Ovary (tissue), 10 donors: ENCODE measurements at regions of chr4 and their contacts with region 1.

Region 1: DNA sequence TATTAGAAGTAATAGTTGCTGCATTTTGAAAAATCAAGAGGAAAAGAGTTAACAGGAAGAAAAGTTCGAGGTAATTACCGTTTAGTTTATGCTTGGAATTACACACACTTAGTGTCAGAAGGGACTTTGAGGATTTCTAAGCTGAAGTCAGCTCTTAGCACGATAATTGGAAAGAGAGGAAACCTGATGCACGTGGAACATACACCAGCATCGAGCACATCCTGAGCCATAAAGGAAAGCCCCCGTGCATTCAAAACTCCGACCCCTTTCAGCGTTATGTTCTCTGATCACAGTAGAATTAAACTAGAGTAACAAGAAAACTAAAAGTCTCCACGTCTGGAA is 400 bp upstream of the PAQR3 start:
- DNase-seq: no peak
- H3K4me3 ChIP-seq: peak overlapping the region; percentile 67
- H3K27ac ChIP-seq: no peak overlapping the region
- H3K4me1 ChIP-seq: no peaks in the 10 kb centered on the region
- H3K27me3 ChIP-seq: no peaks in the 10 kb centered on the region
- CTCF ChIP-seq: no peak
- EP300 ChIP-seq: no peak
- POLR2A ChIP-seq: no peak

Region 2: GRCh38 chr4:80202190-80202711 is 1262.6 kb after region 1 on chr4:
- intact Hi-C with region 1: loop called in 1 of 4 experiments (anchors 10 kb)
- DNase-seq: peak; percentile 86 to 94 (median 88)
- H3K4me3 ChIP-seq: peak overlapping the region; percentile 68
- H3K27ac ChIP-seq: peak overlapping the region; percentile 72 to 75
- H3K4me1 ChIP-seq: peaks cover 5% of the 10 kb centered on the region
- H3K27me3 ChIP-seq: no peaks in the 10 kb centered on the region
- CTCF ChIP-seq: peak; percentile 66 to 89 (median 84)
- EP300 ChIP-seq: no peak
- POLR2A ChIP-seq: no peak